PC-9 (cell line): ENCODE measurements at regions of chr17 and their contacts with region 1.

Region 1: GRCh38 chr17:1331708-1332107 is 52.2 kb downstream of the TRARG1 start:
- DNase-seq: no peak
- H3K4me3 ChIP-seq: no peak overlapping the region
- H3K27ac ChIP-seq: no peak overlapping the region
- H3K4me1 ChIP-seq: no peaks in the 10 kb centered on the region
- H3K27me3 ChIP-seq: peaks cover 18% of the 10 kb centered on the region
- CTCF ChIP-seq: no peak

Region 2: GRCh38 chr17:1098387-1098786 is 233.3 kb before region 1 on chr17:
- CTCF ChIA-PET with region 1: no interaction called
- POLR2A ChIA-PET with region 1: no interaction called
- intact Hi-C with region 1: no loop called
- DNase-seq: no peak
- H3K4me3 ChIP-seq: no peak overlapping the region
- H3K27ac ChIP-seq: no peak overlapping the region
- H3K4me1 ChIP-seq: no peaks in the 10 kb centered on the region
- H3K27me3 ChIP-seq: no peaks in the 10 kb centered on the region
- CTCF ChIP-seq: no peak

Region 3: DNA sequence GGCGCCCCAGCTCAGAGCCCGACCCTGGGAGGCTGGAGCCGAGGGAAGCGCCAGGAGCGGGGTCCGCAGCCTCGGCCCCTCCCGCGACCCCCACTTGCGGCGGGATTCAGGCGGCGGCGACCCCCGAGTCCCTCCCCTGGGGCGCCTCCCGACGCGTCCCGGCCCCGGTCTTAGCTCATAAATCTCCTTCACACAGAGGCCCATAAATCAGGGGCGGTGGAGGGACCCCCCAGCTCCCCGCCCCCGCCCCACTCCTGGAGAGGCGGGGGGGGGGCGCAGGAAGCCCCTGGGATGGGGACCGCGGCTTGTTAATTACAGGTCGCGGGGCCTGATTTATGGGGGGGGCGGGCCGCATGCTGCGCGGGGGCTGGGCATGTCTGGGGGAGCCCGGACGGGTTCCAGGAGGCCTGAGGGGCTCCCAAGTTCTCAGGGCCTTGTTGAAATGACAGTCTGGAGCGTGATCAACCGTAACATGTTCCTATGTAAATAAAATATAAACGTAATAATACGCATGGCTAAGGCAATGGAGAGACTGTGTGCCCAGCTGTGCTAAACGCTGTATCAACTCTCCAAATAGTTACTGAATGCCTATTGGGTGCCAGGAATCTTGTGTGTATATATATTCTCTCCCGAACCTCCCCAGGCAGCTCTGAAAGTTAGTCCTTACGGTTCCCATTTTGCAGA is 71.5 kb before region 1 on chr17:
- CTCF ChIA-PET with region 1: no interaction called
- POLR2A ChIA-PET with region 1: interaction called, 3 read pairs
- intact Hi-C with region 1: loop called (anchors 1 kb)
- DNase-seq: no peak
- H3K4me3 ChIP-seq: peak overlapping the region; percentile 58; the same call in 1 of the 2 replicates
- H3K27ac ChIP-seq: no peak overlapping the region
- H3K4me1 ChIP-seq: peaks cover 10% of the 10 kb centered on the region; the same call in 1 of the 2 replicates
- H3K27me3 ChIP-seq: peaks cover 5% of the 10 kb centered on the region; the same call in 1 of the 2 replicates
- CTCF ChIP-seq: no peak

Region 4: DNA sequence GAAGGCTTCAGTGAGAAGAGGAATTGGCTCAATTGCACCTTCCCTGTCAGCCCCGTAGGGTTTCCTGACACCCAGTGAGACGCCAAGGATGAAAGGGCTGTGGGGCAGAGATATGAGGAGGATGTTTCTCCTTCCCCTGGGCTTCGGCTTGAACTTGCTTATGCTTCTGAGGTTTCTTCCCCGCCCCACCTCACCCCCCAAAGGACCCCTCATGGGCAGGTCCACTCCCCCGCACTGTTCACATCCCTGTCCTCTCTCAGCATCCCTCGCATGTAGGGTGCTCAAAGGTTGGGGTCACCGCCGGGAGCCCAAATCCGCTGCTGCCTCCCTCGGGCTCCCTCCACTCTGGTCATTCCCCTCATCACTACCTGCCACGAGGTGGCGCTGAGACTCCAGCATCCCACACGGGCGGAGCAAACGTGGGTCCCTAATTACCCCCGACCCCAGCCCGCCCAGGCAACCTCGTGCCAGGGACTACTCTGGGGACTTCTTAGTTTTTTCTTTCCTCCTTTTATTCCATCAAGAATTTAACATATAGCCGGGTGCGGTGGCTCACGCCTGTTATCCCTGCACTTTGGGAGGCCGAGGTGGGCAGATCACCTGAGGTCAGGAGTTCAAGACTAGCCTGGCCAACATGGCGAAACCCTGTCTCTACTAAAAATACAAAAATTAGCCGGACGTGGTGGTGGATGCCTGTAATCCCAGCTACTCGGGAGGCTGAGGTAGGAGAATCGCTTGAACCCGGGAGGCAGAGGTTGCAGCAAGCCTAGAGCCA is 55.6 kb before region 1 on chr17:
- CTCF ChIA-PET with region 1: no interaction called
- POLR2A ChIA-PET with region 1: no interaction called
- intact Hi-C with region 1: loop called (anchors 2 kb)
- DNase-seq: peak in 1 of 2 experiments; percentile 67
- H3K4me3 ChIP-seq: no peak overlapping the region
- H3K27ac ChIP-seq: no peak overlapping the region
- H3K4me1 ChIP-seq: no peaks in the 10 kb centered on the region
- H3K27me3 ChIP-seq: peaks cover 32% of the 10 kb centered on the region
- CTCF ChIP-seq: peak; percentile 93